ENCODE measurements at regions of chr1 and their contacts with region 1.

Region 1: DNA sequence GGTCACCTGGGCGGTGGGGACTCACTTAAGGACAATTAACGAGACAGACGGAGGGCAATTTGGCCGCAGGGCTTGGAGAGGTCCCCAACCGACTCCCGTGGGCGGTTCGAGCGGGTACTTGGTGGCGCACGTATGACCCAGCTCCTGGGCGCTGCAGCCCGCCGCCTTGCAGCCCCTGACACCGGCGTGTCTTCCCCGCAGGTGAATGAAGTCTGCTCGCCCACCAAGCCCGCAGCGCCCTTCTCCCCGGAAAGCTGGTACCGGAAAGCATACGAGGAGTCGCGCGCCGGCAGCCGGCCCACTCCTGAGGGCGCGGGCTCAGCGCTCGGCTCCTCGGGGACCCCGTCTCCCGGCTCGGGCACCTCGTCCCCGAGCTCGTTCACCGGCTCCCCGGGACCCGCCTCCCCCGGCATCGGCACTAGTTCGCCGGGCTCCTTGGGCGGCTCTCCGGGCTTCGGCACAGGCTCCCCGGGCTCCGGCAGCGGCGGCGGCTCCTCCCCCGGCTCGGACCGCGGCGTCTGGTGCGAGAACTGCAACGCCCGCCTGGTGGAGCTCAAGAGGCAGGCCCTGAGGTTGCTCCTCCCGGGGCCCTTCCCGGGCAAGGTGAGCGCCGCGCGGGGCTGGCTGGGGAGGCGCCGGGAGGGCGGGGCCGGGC is 1.4 kb downstream of the KIF26B start:
- DNase-seq: peak; percentile 87
- H3K4me3 ChIP-seq: peak overlapping the region; percentile 41
- H3K27ac ChIP-seq: no peak overlapping the region
- H3K4me1 ChIP-seq: peaks cover 22% of the 10 kb centered on the region
- H3K27me3 ChIP-seq: peaks cover 54% of the 10 kb centered on the region
- CTCF ChIP-seq: peak; percentile 62

Region 2: GRCh38 chr1:245277276-245277675 is 121.1 kb after region 1 on chr1:
- intact Hi-C with region 1: loop called (anchors 5 kb)
- DNase-seq: no peak
- H3K4me3 ChIP-seq: no peak overlapping the region
- H3K27ac ChIP-seq: no peak overlapping the region
- H3K4me1 ChIP-seq: no peaks in the 10 kb centered on the region
- H3K27me3 ChIP-seq: no peaks in the 10 kb centered on the region
- CTCF ChIP-seq: no peak

Region 3: DNA sequence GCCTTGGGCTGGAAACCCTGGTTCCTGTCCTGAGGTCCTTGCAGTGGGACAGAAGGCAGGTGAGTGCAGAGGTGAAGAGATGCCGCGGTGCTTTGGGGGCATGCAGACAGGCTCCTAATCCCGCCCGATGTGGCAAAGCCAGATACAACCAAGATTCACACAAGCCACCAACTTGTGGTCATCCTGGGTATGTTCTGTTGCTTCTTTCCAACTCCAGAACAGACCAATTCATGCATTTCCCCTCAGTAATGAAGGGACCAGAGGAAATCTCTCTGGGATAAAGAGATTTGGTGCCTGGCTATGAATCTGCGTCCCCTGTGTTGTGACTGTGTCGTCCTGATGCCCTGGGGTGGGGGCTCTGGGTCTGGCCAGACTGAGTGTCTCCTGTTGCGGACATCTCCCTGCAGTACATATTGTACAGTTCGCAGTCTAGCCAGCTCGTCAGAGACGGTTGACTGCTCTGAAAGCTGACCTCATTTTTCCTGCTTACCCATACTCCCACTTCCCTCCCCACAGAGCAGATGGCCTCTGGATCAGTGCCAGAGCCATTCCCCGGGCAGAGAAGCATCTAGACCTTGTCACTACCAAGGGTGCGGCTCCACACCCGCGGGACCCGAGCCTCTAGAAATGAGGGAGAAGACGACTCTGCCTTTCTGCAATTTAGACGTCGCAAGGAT is 214.8 kb after region 1 on chr1:
- intact Hi-C with region 1: loop called (anchors 10 kb)
- DNase-seq: no peak
- H3K4me3 ChIP-seq: no peak overlapping the region
- H3K27ac ChIP-seq: no peak overlapping the region
- H3K4me1 ChIP-seq: no peaks in the 10 kb centered on the region
- H3K27me3 ChIP-seq: no peaks in the 10 kb centered on the region
- CTCF ChIP-seq: no peak

Region 4: DNA sequence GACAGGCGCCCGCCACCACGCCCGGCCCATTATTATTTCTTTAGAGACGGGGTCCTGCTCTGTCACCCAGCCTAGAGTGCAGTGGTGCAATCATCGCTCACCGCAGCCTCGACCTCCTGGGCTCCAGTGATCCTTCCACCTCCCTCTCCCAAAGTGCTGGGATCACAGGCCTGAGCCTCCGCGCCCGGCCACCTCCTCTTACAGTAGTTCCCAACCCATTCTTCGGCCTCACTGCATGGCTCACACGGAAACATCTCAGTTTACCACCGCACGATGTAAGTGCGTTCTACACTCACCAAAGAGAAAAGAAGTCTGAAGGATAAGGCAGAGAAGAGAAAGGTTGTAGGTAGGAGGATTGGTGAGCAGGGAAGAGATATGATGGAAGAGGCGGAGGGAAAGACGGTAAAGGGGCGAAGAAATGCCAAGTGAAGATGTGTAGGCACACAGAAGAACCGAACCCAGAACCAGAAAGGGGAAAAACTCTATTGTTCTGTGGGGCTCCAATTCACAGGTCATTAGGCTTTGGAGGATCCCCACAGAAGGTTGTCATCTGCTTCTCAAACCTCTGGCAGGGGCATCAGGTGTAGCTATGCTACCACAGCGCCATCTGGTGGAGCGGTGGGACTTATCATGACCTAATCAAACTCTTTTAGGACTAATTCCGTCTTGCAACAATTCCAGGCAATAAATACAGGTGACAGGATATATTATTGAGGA is 846.7 kb after region 1 on chr1:
- intact Hi-C with region 1: loop called (anchors 5 kb)
- DNase-seq: peak; percentile 89
- H3K4me3 ChIP-seq: no peak overlapping the region
- H3K27ac ChIP-seq: no peak overlapping the region
- H3K4me1 ChIP-seq: no peaks in the 10 kb centered on the region
- H3K27me3 ChIP-seq: no peaks in the 10 kb centered on the region
- CTCF ChIP-seq: peak; percentile 74

Region 5: DNA sequence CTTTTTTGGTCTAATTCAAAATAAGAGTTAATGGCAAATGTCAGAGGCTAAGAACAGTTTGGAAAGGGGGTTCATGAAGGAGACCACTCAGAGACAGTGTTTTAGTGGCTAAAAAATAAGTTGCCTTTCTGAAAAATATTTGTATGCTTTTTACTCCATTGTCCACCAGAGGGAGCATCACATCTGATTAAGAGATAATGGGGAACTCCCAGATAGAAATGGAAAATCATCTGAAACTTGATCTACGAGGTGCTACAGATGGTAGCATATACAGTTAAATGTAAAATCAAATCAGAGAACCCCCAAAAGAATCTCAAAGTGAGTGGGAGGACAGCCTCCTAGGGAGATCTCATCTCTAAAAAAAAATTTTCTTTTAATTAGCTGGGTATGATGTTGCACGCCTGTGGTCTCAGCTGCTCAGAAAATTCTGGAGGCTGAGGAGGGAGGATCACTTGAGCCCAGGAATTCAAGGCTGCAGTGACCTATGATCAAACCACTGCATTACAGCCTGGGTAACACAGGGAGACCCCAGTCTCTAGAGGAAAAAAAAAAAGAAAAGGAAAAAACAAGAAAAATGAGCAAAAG is 1341.2 kb after region 1 on chr1:
- intact Hi-C with region 1: loop called (anchors 10 kb)
- DNase-seq: no peak
- H3K4me3 ChIP-seq: no peak overlapping the region
- H3K27ac ChIP-seq: no peak overlapping the region
- H3K4me1 ChIP-seq: no peaks in the 10 kb centered on the region
- H3K27me3 ChIP-seq: no peaks in the 10 kb centered on the region
- CTCF ChIP-seq: peak; percentile 44